ENCODE measurements at regions of chr1 and their contacts with region 1.

Region 1: DNA sequence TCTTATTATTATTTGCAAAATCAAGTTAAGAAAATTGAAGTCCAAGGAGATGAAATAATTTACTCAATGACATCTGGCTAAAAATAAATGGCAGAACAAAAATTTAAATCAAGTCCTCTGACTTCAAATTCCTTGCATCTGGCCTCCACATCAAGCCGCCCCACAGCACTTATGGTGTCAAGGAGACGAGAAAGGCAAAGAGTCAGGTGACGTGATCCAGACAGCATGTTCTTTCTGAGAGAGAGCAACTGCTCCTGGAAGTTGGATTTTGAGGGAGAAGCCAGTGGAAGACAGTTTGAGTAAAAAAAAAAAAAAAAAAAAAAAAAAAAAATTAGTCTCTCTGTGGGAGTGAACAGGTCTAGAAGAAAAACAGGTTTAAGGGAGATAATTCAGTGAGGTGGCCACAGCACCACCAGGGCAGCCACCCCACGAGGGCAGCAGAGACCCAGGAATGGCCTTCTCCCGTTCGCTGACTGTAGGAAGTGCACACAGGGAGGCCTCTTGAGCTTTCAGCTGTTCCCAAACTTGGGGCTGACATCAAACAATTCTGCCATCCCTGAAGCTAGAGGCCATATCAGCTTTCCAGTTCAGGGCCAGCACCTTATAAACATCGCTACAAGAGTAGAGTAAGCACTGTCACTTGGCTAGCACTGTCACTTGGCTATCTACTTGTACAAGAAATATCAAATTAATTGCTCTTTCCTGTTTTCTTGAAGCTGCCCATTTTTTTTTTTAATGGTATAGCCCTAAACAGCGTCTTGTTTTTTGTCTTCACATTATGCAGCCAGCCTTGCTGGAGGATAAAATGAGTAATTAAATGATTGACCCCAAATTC is 7.8 kb downstream of the C1orf162 start:
- DNase-seq: peak in 8 of 9 experiments; percentile 46 to 78 (median 56)
- ATAC-seq: peak; percentile 41
- H3K4me3 ChIP-seq: no peak overlapping the region
- H3K4me3 Mint-ChIP-seq: no peak overlapping the region
- H3K27ac ChIP-seq: no peak overlapping the region
- H3K27ac Mint-ChIP-seq: no peak overlapping the region
- H3K4me1 ChIP-seq: peaks cover 22% of the 10 kb centered on the region
- H3K4me1 Mint-ChIP-seq: peaks cover 40% of the 10 kb centered on the region
- H3K27me3 ChIP-seq: no peaks in the 10 kb centered on the region
- H3K27me3 Mint-ChIP-seq: no peaks in the 10 kb centered on the region
- CTCF ChIP-seq: no peak

Region 2: GRCh38 chr1:111471012-111471411 is 10.6 kb before region 1 on chr1:
- CTCF ChIA-PET with region 1: interaction called, 5 read pairs
- POLR2A ChIA-PET with region 1: interaction called, 5 read pairs
- intact Hi-C with region 1: loop called in 1 of 2 experiments (anchors 2 kb)
- DNase-seq: peak; percentile 35 to 91 (median 75)
- ATAC-seq: peak; percentile 95
- H3K4me3 ChIP-seq: peak overlapping the region; percentile 28 to 32
- H3K4me3 Mint-ChIP-seq: no peak overlapping the region
- H3K27ac ChIP-seq: peak overlapping the region; percentile 54 to 84
- H3K27ac Mint-ChIP-seq: no peak overlapping the region
- H3K4me1 ChIP-seq: peaks cover 55% of the 10 kb centered on the region
- H3K4me1 Mint-ChIP-seq: peaks cover 25% of the 10 kb centered on the region
- H3K27me3 ChIP-seq: no peaks in the 10 kb centered on the region
- H3K27me3 Mint-ChIP-seq: no peaks in the 10 kb centered on the region
- CTCF ChIP-seq: no peak

Region 3: DNA sequence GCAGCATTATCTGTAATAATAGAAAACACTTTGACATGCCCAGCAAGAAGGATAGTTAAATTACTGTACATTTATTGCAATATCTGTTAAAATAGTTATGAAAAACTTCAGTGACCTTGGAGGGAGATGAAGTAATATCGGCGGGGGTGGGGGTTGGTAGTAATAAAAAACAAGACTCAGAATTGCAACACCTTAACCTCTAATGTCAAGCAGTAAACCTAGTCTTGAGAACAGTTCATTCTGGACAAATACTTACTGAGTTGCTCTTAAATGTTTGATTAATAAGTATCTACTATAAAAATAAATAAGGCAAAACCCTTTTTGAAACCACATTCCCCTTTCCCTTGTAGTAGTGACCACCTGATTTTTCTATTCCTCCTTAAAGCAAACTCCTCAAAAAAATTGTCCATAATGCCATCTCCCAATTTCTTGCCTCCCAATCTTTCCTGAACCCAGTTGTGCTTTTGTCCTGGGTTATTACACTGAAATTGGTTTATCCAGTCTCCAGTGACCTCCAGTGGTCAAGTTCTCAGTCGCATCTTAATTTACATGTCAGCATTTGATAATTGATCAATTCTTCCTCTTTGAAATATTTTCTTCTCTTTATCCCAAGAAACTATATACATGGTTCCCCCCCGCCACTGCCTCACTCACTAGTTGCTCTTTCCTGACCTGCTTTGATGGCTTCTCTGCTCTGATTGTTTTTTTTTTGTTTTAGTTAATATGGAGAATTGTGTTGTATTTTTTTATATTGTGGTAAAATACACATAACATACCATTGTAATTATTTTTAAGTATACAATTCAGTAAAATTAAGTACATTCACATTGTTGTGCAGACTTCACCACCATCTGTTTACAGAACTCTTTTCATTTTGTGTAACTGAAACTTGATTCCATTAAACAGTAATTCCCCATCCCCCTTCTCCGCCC is 174.7 kb after region 1 on chr1:
- CTCF ChIA-PET with region 1: interaction called, 4 read pairs
- POLR2A ChIA-PET with region 1: no interaction called
- intact Hi-C with region 1: loop called in 1 of 2 experiments (anchors 1 kb)
- DNase-seq: peak in 2 of 9 experiments; percentile 57 to 68
- ATAC-seq: no peak
- H3K4me3 ChIP-seq: no peak overlapping the region
- H3K4me3 Mint-ChIP-seq: no peak overlapping the region
- H3K27ac ChIP-seq: no peak overlapping the region
- H3K27ac Mint-ChIP-seq: peak overlapping the region; percentile 33
- H3K4me1 ChIP-seq: peaks cover 63% of the 10 kb centered on the region
- H3K4me1 Mint-ChIP-seq: peaks cover 53% of the 10 kb centered on the region
- H3K27me3 ChIP-seq: no peaks in the 10 kb centered on the region
- H3K27me3 Mint-ChIP-seq: no peaks in the 10 kb centered on the region
- CTCF ChIP-seq: peak; percentile 62

Region 4: DNA sequence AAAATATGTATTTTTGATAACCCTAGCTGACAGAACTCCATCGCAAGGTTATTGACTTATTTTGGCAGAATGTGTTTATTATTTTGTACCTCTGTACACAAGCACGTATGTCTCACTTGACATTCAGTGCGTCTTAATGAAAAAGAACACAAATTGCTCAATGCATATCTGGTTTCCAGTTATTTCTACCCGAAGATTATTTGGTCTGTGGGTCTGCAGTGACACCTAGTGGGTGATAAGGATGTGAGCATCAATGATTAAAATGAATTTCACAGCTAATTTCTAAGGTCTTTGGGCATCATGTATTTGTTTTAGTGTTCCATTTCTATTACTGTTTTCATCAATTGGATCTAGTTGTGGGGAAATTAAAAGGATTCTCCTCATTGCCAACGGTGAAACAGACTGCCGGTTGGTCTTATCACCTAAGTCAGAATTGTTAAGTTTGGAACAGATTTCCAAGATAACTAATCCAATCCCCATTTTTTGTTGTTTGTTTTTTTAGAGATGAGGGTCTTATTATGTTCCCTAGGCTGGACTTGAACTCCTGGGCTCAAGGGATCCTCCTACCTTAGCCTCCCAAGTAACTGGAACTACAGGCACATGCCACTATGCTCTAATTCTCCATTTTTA is 288.0 kb after region 1 on chr1:
- CTCF ChIA-PET with region 1: interaction called, 6 read pairs
- POLR2A ChIA-PET with region 1: no interaction called
- intact Hi-C with region 1: loop called (anchors 1 kb)
- DNase-seq: peak; percentile 7 to 82 (median 57)
- ATAC-seq: peak; percentile 72
- H3K4me3 ChIP-seq: no peak overlapping the region
- H3K4me3 Mint-ChIP-seq: no peak overlapping the region
- H3K27ac ChIP-seq: no peak overlapping the region
- H3K27ac Mint-ChIP-seq: no peak overlapping the region
- H3K4me1 ChIP-seq: no peaks in the 10 kb centered on the region
- H3K4me1 Mint-ChIP-seq: peaks cover 7% of the 10 kb centered on the region
- H3K27me3 ChIP-seq: no peaks in the 10 kb centered on the region
- H3K27me3 Mint-ChIP-seq: no peaks in the 10 kb centered on the region
- CTCF ChIP-seq: peak; percentile 94

Region 5: DNA sequence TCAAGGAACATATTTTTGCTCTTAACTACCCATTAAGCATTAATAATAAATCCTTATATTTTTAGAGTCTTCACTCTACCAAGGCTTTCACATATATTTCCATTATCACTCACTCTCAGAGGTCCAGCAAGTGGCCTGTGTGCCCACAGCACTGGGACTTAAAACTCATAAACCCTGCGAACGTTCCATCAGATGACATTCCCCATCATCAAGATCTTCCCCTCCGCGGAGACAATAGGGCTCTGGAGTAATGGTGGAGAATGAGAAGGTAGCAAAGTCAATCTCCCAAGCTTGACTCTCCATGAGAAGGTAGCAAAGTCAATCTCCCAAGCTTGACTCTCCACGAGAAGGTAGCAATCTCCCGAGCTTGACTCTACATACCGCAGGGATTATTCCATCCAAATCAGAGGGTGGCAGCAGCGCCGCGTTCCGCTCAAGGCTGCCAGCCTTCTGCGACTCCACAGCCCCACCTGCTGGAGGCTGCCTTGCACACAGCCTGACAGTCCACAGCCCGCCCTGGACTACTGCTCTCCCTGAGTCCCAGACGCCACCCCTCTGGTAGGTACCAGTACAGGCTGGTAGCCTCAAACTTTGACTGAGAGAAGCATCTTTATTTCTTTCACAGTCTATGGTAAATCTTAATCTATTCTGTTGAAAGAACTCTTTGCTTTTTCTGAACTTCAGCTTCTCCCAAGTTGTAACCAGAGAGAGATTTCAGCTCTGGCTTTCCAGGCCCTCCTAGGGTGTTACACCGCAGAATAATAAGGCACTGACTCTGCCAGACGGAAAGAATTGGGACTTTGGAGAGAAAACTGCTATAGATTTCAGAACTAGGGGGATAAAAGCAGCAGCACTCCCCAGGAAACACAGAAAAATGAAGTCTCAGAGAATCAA is 888.0 kb after region 1 on chr1:
- CTCF ChIA-PET with region 1: interaction called, 3 read pairs
- POLR2A ChIA-PET with region 1: no interaction called
- intact Hi-C with region 1: loop called (anchors 2 to 10 kb)
- DNase-seq: peak; percentile 71 to 87 (median 83)
- ATAC-seq: peak; percentile 100
- H3K4me3 ChIP-seq: no peak overlapping the region
- H3K4me3 Mint-ChIP-seq: no peak overlapping the region
- H3K27ac ChIP-seq: no peak overlapping the region
- H3K27ac Mint-ChIP-seq: no peak overlapping the region
- H3K4me1 ChIP-seq: no peaks in the 10 kb centered on the region
- H3K4me1 Mint-ChIP-seq: peaks cover 4% of the 10 kb centered on the region
- H3K27me3 ChIP-seq: peaks cover 0 to 4% of the 10 kb centered on the region in 2 experiments
- H3K27me3 Mint-ChIP-seq: peaks cover 42% of the 10 kb centered on the region
- CTCF ChIP-seq: peak; percentile 93

Measured in CD8-positive, alpha-beta T cell (primary cell).